CD4-positive, alpha-beta T cell (primary cell): ENCODE measurements at regions of chr17 and their contacts with region 1.

Region 1: DNA sequence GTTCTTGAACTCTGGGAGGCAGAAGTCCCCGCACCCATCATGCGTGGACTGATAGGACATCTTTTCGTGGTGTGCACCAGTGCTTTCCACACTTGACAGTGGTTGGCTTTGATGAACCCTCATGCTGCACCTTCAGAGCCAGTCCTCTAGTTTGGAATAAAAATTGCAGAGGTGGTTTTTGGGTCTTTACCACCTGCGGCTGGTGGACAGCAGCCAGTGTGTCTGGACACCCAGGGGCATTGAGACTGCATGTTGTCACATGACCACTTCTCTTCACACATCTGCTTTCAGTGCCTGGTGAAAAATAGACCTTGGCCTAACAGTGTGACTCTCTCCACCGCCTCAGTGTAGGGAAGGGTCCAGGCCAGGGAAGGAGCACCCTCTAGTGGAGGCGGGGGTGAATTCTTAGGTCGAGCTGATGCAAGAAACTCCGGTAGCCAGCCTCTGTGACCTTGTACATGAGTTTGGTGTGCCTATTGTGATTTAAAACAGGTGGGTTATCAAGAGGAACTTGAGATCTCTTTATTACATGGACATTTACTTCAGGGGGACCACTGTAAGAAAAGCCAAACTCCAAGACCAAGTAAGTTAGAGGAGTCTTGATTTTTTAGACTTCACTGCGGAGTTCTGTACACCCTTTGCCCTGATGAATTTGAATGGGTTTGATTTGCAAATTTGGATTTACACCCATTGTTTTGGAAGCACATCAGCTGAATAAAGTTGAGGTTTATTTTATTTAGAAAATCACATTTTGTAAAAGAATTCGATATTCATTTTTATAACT is 17.9 kb downstream of the GOSR2 start:
- DNase-seq: peak; percentile 42 to 78 (median 58)
- ATAC-seq: peak; percentile 83
- H3K4me3 ChIP-seq: no peak overlapping the region
- H3K4me3 Mint-ChIP-seq: no peak overlapping the region
- H3K27ac ChIP-seq: no peak overlapping the region
- H3K27ac Mint-ChIP-seq: peak overlapping the region; percentile 71
- H3K4me1 ChIP-seq: peaks cover 16% of the 10 kb centered on the region
- H3K4me1 Mint-ChIP-seq: peaks cover 28% of the 10 kb centered on the region
- H3K27me3 ChIP-seq: no peaks in the 10 kb centered on the region
- H3K27me3 Mint-ChIP-seq: no peaks in the 10 kb centered on the region
- CTCF ChIP-seq: peak; percentile 74

Region 2: GRCh38 chr17:46841561-46842379 is 99.0 kb before region 1 on chr17:
- CTCF ChIA-PET with region 1: interaction called, 5 read pairs
- POLR2A ChIA-PET with region 1: no interaction called
- intact Hi-C with region 1: loop called in 1 of 2 experiments (anchors 2 kb)
- DNase-seq: peak in 3 of 14 experiments; percentile 20 to 54 (median 47)
- ATAC-seq: peak; percentile 24
- H3K4me3 ChIP-seq: no peak overlapping the region
- H3K4me3 Mint-ChIP-seq: no peak overlapping the region
- H3K27ac ChIP-seq: no peak overlapping the region
- H3K27ac Mint-ChIP-seq: no peak overlapping the region
- H3K4me1 ChIP-seq: peaks cover 7% of the 10 kb centered on the region
- H3K4me1 Mint-ChIP-seq: no peaks in the 10 kb centered on the region
- H3K27me3 ChIP-seq: peaks cover 18 to 26% of the 10 kb centered on the region in 2 experiments
- H3K27me3 Mint-ChIP-seq: peaks cover 63% of the 10 kb centered on the region
- CTCF ChIP-seq: peak; percentile 57

Region 3: GRCh38 chr17:46869975-46870803 is 70.6 kb before region 1 on chr17:
- CTCF ChIA-PET with region 1: no interaction called
- POLR2A ChIA-PET with region 1: no interaction called
- intact Hi-C with region 1: no loop called
- DNase-seq: no peak
- ATAC-seq: no peak
- H3K4me3 ChIP-seq: no peak overlapping the region
- H3K4me3 Mint-ChIP-seq: no peak overlapping the region
- H3K27ac ChIP-seq: no peak overlapping the region
- H3K27ac Mint-ChIP-seq: no peak overlapping the region
- H3K4me1 ChIP-seq: no peaks in the 10 kb centered on the region
- H3K4me1 Mint-ChIP-seq: no peaks in the 10 kb centered on the region
- H3K27me3 ChIP-seq: peaks cover under 1 to 2% of the 10 kb centered on the region in 2 experiments
- H3K27me3 Mint-ChIP-seq: peaks cover 20% of the 10 kb centered on the region
- CTCF ChIP-seq: no peak

Region 4: GRCh38 chr17:46984892-46985291 is 44.1 kb after region 1 on chr17:
- CTCF ChIA-PET with region 1: no interaction called
- POLR2A ChIA-PET with region 1: no interaction called
- intact Hi-C with region 1: no loop called
- DNase-seq: no peak
- ATAC-seq: no peak
- H3K4me3 ChIP-seq: no peak overlapping the region
- H3K4me3 Mint-ChIP-seq: no peak overlapping the region
- H3K27ac ChIP-seq: no peak overlapping the region
- H3K27ac Mint-ChIP-seq: no peak overlapping the region
- H3K4me1 ChIP-seq: no peaks in the 10 kb centered on the region
- H3K4me1 Mint-ChIP-seq: peaks cover 5% of the 10 kb centered on the region
- H3K27me3 ChIP-seq: peaks cover 5 to 9% of the 10 kb centered on the region in 2 experiments
- H3K27me3 Mint-ChIP-seq: peaks cover 24% of the 10 kb centered on the region
- CTCF ChIP-seq: no peak

Region 5: DNA sequence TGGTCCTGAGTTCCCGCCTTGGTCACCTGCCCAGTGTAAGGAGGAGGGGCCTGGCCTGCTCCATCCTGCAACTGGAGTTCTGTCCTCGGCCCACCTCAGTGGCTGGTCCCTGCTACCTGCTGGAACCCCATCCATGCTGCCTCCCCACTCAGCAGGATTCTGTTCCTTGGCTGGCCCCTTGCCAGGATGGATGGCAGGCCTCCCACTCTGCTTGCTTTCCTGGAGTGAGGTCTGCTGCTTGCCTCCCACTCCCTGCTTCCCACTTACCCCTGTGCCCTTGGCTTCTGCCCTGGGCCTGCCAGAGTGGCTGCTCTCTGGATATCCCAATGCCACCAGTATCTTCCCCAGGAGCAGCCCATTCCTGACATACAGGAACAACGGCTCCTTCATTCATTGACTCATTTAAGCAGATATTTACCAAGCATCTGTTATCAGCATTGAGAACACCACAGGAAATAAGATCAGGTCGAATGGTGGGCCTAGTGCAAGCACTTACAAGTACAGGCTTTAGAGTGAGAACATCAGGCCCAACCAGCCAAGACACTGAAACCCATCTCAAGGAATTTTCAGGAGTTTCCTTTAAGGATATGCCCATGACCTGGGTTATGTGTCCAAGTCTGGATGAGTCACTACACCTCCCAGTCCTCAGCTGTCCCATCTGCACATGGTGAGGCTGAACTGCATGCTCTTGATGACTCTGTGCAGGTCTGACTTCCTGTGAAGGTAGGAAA is 55.2 kb after region 1 on chr17:
- CTCF ChIA-PET with region 1: no interaction called
- POLR2A ChIA-PET with region 1: no interaction called
- intact Hi-C with region 1: loop called in 1 of 2 experiments (anchors 2 kb)
- DNase-seq: no peak
- ATAC-seq: no peak
- H3K4me3 ChIP-seq: no peak overlapping the region
- H3K4me3 Mint-ChIP-seq: no peak overlapping the region
- H3K27ac ChIP-seq: no peak overlapping the region
- H3K27ac Mint-ChIP-seq: no peak overlapping the region
- H3K4me1 ChIP-seq: peaks cover 2% of the 10 kb centered on the region
- H3K4me1 Mint-ChIP-seq: no peaks in the 10 kb centered on the region
- H3K27me3 ChIP-seq: no peaks in the 10 kb centered on the region
- H3K27me3 Mint-ChIP-seq: no peaks in the 10 kb centered on the region
- CTCF ChIP-seq: no peak

Region 6: GRCh38 chr17:47119746-47120520 is 179.1 kb after region 1 on chr17:
- CTCF ChIA-PET with region 1: no interaction called
- POLR2A ChIA-PET with region 1: no interaction called
- intact Hi-C with region 1: loop called in 1 of 2 experiments (anchors 10 kb)
- DNase-seq: no peak
- ATAC-seq: no peak
- H3K4me3 ChIP-seq: no peak overlapping the region
- H3K4me3 Mint-ChIP-seq: no peak overlapping the region
- H3K27ac ChIP-seq: no peak overlapping the region
- H3K27ac Mint-ChIP-seq: no peak overlapping the region
- H3K4me1 ChIP-seq: no peaks in the 10 kb centered on the region
- H3K4me1 Mint-ChIP-seq: no peaks in the 10 kb centered on the region
- H3K27me3 ChIP-seq: no peaks in the 10 kb centered on the region
- H3K27me3 Mint-ChIP-seq: no peaks in the 10 kb centered on the region
- CTCF ChIP-seq: no peak

Region 7: GRCh38 chr17:47615766-47616424 is 675.1 kb after region 1 on chr17:
- CTCF ChIA-PET with region 1: no interaction called
- POLR2A ChIA-PET with region 1: no interaction called
- intact Hi-C with region 1: loop called (anchors 5 to 10 kb)
- DNase-seq: peak in 4 of 14 experiments; percentile 2 to 75 (median 64)
- ATAC-seq: peak; percentile 61
- H3K4me3 ChIP-seq: no peak overlapping the region
- H3K4me3 Mint-ChIP-seq: no peak overlapping the region
- H3K27ac ChIP-seq: no peak overlapping the region
- H3K27ac Mint-ChIP-seq: peak overlapping the region; percentile 1
- H3K4me1 ChIP-seq: no peaks in the 10 kb centered on the region
- H3K4me1 Mint-ChIP-seq: no peaks in the 10 kb centered on the region
- H3K27me3 ChIP-seq: no peaks in the 10 kb centered on the region
- H3K27me3 Mint-ChIP-seq: no peaks in the 10 kb centered on the region
- CTCF ChIP-seq: peak; percentile 83